Caco-2 (cell line): ENCODE measurements at regions of chr10 and their contacts with region 1.

Region 1: GRCh38 chr10:35723059-35723458 is 81.0 kb upstream of the FZD8 start:
- DNase-seq: no peak
- H3K4me3 ChIP-seq: no peak overlapping the region
- H3K4me3 Mint-ChIP-seq: no peak overlapping the region
- H3K27ac Mint-ChIP-seq: no peak overlapping the region
- H3K4me1 ChIP-seq: peaks cover 7% of the 10 kb centered on the region; the same call in 1 of the 2 replicates
- H3K4me1 Mint-ChIP-seq: peaks cover 9% of the 10 kb centered on the region
- H3K27me3 ChIP-seq: no peaks in the 10 kb centered on the region
- H3K27me3 Mint-ChIP-seq: peaks cover 9% of the 10 kb centered on the region
- CTCF ChIP-seq: no peak

Region 2: GRCh38 chr10:35770817-35771355 is 47.8 kb after region 1 on chr10:
- CTCF ChIA-PET with region 1: interaction called, 3 read pairs
- POLR2A ChIA-PET with region 1: no interaction called
- intact Hi-C with region 1: loop called (anchors 2 kb)
- DNase-seq: peak; percentile 89 to 94
- H3K4me3 ChIP-seq: no peak overlapping the region
- H3K4me3 Mint-ChIP-seq: peak overlapping the region; percentile 22
- H3K27ac Mint-ChIP-seq: no peak overlapping the region
- H3K4me1 ChIP-seq: peaks cover 68% of the 10 kb centered on the region
- H3K4me1 Mint-ChIP-seq: peaks cover 35% of the 10 kb centered on the region
- H3K27me3 ChIP-seq: no peaks in the 10 kb centered on the region
- H3K27me3 Mint-ChIP-seq: no peaks in the 10 kb centered on the region
- CTCF ChIP-seq: no peak

Region 3: GRCh38 chr10:35803046-35803445 is 80.0 kb after region 1 on chr10:
- CTCF ChIA-PET with region 1: no interaction called
- POLR2A ChIA-PET with region 1: no interaction called
- intact Hi-C with region 1: no loop called
- DNase-seq: no peak
- H3K4me3 ChIP-seq: no peak overlapping the region
- H3K4me3 Mint-ChIP-seq: no peak overlapping the region
- H3K27ac Mint-ChIP-seq: no peak overlapping the region
- H3K4me1 ChIP-seq: no peaks in the 10 kb centered on the region
- H3K4me1 Mint-ChIP-seq: peaks cover 5% of the 10 kb centered on the region
- H3K27me3 ChIP-seq: no peaks in the 10 kb centered on the region; the same call in 1 of the 2 replicates
- H3K27me3 Mint-ChIP-seq: peaks cover 18% of the 10 kb centered on the region
- CTCF ChIP-seq: no peak